ENCODE measurements at regions of chr6 and their contacts with region 1.

Region 1: DNA sequence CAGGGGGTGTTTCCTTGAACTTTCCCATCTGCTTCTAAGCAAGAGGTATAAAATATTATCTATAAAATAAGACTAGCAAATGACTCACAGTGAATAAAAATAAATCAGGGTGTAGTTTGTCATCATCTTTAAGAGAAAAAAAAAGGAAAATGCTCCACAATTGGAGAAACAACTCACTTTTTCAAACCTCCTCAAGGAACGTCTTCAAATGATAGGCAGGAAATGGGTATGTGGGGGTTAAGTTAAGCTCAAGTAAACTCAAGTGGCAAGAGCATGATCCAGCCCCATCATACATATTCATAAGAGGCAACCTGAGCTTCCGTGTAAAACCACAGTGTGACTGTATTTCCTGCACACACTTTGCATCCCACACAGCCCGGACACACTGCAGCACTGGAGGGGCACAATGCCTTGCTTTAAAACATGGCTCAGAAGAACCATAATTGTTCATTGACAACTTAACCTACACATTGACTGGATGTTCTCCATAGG is 58.5 kb upstream of the CEP85L start:
- DNase-seq: peak; percentile 96
- H3K4me3 ChIP-seq: peak overlapping the region; percentile 80
- H3K27ac ChIP-seq: peak overlapping the region; percentile 87
- H3K4me1 ChIP-seq: peaks cover 45% of the 10 kb centered on the region
- CTCF ChIP-seq: no peak

Region 2: GRCh38 chr6:118651282-118652050 is 58.4 kb before region 1 on chr6 and contains the start of gene CEP85L:
- CTCF ChIA-PET with region 1: no interaction called
- POLR2A ChIA-PET with region 1: interaction called, 9 read pairs
- intact Hi-C with region 1: loop called (anchors 1 kb)
- DNase-seq: peak; percentile 93
- H3K4me3 ChIP-seq: peak within 1 kb of the TSS; percentile 81
- H3K27ac ChIP-seq: peak within 1 kb of the TSS; percentile 25
- H3K4me1 ChIP-seq: peaks cover 50% of the 10 kb centered on the region
- CTCF ChIP-seq: 0 out of 2 replicates have a peak, but pooled peaks have one; percentile 4
- total RNA-seq, gene CEP85L: 7.4 and 9.6 TPM in 2 replicates

Region 3: DNA sequence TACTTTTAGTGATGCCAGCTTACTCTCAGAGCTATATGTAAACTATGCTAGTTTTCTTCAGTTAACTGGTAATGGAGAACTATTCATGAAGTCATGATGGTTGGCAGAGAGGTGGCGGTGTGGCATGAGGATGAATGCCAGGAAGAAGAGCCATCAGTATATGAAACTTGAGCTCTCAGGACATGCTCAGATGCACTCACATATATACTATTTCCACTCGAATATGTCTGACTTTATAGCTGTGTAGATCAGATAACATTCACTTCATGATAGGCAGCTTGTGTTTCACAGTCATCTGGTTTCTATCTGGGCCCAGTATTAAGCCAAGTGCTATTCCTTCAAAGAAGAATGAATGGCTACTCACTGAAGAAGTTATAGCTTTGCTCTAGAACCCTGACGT is 12.4 kb before region 1 on chr6:
- CTCF ChIA-PET with region 1: interaction called, 5 read pairs
- POLR2A ChIA-PET with region 1: interaction called, 14 read pairs
- intact Hi-C with region 1: no loop called
- DNase-seq: no peak
- H3K4me3 ChIP-seq: no peak overlapping the region
- H3K27ac ChIP-seq: no peak overlapping the region
- H3K4me1 ChIP-seq: no peaks in the 10 kb centered on the region
- CTCF ChIP-seq: no peak

Region 4: DNA sequence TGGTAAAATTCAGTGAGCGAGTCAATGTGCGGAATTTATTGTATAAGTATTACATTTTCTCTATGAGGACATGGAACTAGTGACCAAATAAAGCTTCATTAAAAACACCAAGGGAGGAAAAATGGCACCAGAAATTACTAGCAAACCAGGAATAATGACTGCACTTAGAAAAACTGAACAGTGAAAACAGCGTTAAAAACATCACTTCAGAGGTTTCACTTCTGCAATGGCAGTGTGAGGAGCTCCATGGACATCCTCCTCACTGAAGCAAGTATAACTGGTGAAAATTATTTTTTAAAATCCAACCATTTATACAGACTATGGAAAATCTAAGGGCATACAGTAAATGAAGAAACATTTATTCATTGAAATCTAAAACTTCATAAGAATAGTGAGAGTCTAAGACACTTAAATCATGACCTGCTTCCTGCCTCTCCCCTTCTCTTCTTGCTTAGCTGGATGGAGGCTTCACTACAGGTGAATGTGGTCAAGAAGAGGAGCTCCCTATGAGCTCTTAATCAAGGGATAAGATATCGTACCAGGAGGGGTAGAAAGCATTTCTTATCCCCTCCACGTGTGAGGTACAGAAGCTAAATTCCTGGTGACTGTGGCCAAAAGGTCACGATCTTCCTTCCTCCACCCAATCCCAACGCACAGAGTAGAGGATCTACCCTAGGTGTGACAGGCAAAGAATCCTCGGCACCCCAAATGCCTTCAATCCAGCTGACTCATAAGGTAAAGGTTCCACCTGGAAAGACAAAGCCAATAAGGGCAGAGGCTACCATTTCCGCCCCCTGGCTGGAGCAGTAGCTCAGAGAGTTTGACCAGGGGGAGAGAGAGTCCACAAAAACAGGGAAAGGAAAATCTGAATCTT is 171.8 kb after region 1 on chr6:
- CTCF ChIA-PET with region 1: no interaction called
- POLR2A ChIA-PET with region 1: interaction called, 10 read pairs
- intact Hi-C with region 1: no loop called
- DNase-seq: peak; percentile 67
- H3K4me3 ChIP-seq: peak overlapping the region; percentile 53
- H3K27ac ChIP-seq: peak overlapping the region; percentile 58
- H3K4me1 ChIP-seq: peaks cover 46% of the 10 kb centered on the region
- CTCF ChIP-seq: no peak